Caco-2 (cell line): ENCODE measurements at regions of chr7 and their contacts with region 1.

Region 1: DNA sequence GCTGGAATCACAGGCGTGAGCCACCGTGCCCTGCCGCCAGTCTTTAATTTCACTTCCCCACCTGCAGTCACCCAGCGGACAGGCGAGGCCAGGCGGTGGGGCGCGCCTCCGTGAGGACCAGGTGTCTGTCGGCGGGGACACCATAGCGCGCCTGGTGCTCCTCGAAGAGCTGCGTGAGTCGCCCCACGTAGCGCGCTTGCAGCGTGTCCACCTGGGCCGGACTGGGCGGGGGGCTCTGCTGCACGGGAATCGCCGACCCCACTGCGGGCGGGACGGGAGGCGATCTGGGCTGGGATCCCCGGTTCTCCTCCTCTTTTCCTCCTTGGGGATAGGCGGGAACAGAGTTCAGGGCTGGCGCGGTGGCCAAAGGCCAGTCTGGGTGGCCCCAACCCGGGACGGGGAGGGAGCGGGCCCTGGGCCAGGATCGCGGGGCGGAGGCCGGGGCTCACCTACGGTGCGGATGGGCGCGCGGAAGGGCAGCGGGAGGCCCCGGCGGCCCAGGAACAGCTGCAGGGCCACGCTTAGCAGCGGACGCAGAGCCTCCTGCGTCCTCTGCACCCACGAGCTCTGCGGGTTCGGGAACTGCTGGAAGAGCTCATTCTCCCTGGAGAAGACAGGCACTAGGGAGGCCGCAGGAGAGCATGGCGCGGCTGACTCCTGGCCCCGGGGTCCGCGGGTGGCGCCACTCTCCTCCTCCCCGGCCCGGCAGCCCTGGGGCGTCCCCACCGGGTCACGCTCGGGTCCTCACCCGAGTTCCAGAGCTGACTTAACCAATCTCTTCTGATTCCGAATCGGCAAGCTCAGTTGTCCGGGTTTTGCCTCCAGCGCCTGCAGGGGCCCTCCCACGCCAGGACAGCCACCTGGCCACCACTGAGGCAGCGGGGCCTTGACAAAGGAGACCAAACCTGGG is 1.1 kb upstream of the MOGAT3 start:
- DNase-seq: no peak
- H3K4me3 ChIP-seq: no peak overlapping the region
- H3K4me3 Mint-ChIP-seq: peak overlapping the region; percentile 70
- H3K27ac Mint-ChIP-seq: peak overlapping the region; percentile 70
- H3K4me1 ChIP-seq: peaks cover 20% of the 10 kb centered on the region
- H3K4me1 Mint-ChIP-seq: peaks cover 14% of the 10 kb centered on the region
- H3K27me3 ChIP-seq: no peaks in the 10 kb centered on the region
- H3K27me3 Mint-ChIP-seq: no peaks in the 10 kb centered on the region
- CTCF ChIP-seq: no peak

Region 2: DNA sequence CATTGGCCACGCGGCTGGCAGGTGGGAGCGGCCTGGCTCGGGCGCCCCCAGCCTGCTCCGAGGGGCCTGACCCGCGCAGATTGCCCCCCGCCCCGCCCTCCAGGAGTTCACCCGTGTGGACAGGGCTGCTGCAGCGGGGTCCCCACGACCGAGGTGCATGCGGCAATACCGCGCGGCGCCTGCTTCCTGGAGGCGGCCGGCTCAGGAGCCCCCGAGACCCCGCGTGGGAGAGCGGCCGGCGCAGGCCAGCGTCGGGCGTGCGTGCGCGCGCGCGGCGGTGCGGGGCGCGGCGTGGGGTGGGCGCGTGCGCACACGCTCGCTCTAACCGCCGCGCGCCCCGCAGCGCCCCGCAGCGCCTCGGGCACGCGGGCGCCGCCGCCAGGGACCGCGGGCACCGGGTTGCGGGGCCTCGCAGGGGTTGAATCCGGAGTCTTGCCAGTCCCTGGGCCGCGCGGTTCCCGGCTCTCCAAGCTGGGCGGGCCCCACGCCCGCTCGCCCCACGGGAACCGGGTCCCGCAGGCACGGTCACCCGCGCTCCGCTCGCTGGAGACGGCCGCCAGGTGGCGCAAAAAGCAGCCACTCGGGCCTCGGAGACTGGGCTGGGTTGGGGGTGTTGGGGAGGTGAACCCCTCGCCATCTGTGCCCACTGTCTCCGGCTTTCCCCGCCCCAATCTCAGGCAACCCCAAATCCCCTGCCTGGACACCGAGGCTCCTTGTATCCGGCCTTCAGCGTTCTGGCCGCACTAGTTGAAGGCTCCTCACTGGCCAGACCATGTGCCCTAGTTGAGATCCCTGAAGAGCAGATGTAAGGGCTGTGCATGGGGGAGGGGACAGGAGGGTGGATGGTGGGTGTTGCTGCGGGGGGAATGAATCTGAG is 305.0 kb before region 1 on chr7:
- CTCF ChIA-PET with region 1: no interaction called
- POLR2A ChIA-PET with region 1: no interaction called
- intact Hi-C with region 1: no loop called
- DNase-seq: peak in 1 of 2 experiments; percentile 70
- H3K4me3 ChIP-seq: peak overlapping the region; percentile 50
- H3K4me3 Mint-ChIP-seq: peak overlapping the region; percentile 100
- H3K27ac Mint-ChIP-seq: peak overlapping the region; percentile 86
- H3K4me1 ChIP-seq: peaks cover 31% of the 10 kb centered on the region
- H3K4me1 Mint-ChIP-seq: peaks cover 32% of the 10 kb centered on the region
- H3K27me3 ChIP-seq: no peaks in the 10 kb centered on the region
- H3K27me3 Mint-ChIP-seq: no peaks in the 10 kb centered on the region
- CTCF ChIP-seq: peak; percentile 84 to 85

Region 3: DNA sequence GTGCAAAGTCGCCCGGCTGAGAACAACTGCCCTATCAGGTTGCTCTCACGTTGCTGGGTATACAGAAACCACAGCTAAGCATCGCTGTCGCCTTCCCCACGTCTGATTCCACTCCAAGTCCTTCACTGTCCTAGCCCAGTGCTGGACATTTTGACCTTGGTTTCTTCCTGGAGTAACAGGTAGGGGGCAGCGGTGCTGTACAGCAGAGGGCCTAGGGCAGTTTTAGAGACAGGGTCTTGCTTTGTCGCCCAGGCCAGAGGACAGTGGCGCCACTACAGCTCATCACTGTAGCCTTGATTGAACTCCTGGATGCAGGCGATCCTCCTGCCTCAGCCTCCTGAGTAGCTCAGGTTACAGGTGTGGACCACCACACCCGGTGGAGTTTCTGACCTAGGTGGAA is 33.1 kb after region 1 on chr7:
- CTCF ChIA-PET with region 1: interaction called, 3 read pairs
- POLR2A ChIA-PET with region 1: no interaction called
- intact Hi-C with region 1: loop called (anchors 1 kb)
- DNase-seq: peak in 1 of 2 experiments; percentile 41
- H3K4me3 ChIP-seq: no peak overlapping the region
- H3K4me3 Mint-ChIP-seq: peak overlapping the region; percentile 44
- H3K27ac Mint-ChIP-seq: no peak overlapping the region
- H3K4me1 ChIP-seq: peaks cover 21% of the 10 kb centered on the region
- H3K4me1 Mint-ChIP-seq: peaks cover 26% of the 10 kb centered on the region
- H3K27me3 ChIP-seq: no peaks in the 10 kb centered on the region
- H3K27me3 Mint-ChIP-seq: no peaks in the 10 kb centered on the region
- CTCF ChIP-seq: peak; percentile 17 to 23

Region 4: GRCh38 chr7:101251871-101252659 is 50.1 kb after region 1 on chr7:
- CTCF ChIA-PET with region 1: no interaction called
- POLR2A ChIA-PET with region 1: no interaction called
- intact Hi-C with region 1: loop called (anchors 2 kb)
- DNase-seq: peak; percentile 99 to 100
- H3K4me3 ChIP-seq: peak overlapping the region; percentile 80
- H3K4me3 Mint-ChIP-seq: peak overlapping the region; percentile 88
- H3K27ac Mint-ChIP-seq: peak overlapping the region; percentile 92
- H3K4me1 ChIP-seq: no peaks in the 10 kb centered on the region
- H3K4me1 Mint-ChIP-seq: peaks cover 6% of the 10 kb centered on the region
- H3K27me3 ChIP-seq: no peaks in the 10 kb centered on the region
- H3K27me3 Mint-ChIP-seq: no peaks in the 10 kb centered on the region
- CTCF ChIP-seq: no peak

Region 5: GRCh38 chr7:101436857-101437576 is 235.1 kb after region 1 on chr7:
- CTCF ChIA-PET with region 1: no interaction called
- POLR2A ChIA-PET with region 1: no interaction called
- intact Hi-C with region 1: no loop called
- DNase-seq: peak; percentile 69 to 80
- H3K4me3 ChIP-seq: no peak overlapping the region
- H3K4me3 Mint-ChIP-seq: peak overlapping the region; percentile 28
- H3K27ac Mint-ChIP-seq: peak overlapping the region; percentile 21
- H3K4me1 ChIP-seq: peaks cover 11% of the 10 kb centered on the region
- H3K4me1 Mint-ChIP-seq: peaks cover 7% of the 10 kb centered on the region
- H3K27me3 ChIP-seq: no peaks in the 10 kb centered on the region
- H3K27me3 Mint-ChIP-seq: no peaks in the 10 kb centered on the region
- CTCF ChIP-seq: no peak